Activated naive CD4-positive, alpha-beta T cell treated with anti-CD3 and anti-CD28 coated beads, Interleukin-2, amount 10 ng/mL, durations not matched to agents 7 days and 5 days (primary cell): ENCODE measurements at regions of chr14 and their contacts with region 1.

Region 1: GRCh38 chr14:105374383-105374782 is 24.0 kb upstream of the TEX22 start:
- DNase-seq: no peak
- H3K4me3 Mint-ChIP-seq: no peak overlapping the region
- H3K27ac Mint-ChIP-seq: no peak overlapping the region
- H3K4me1 Mint-ChIP-seq: peaks cover 23% of the 10 kb centered on the region
- H3K27me3 Mint-ChIP-seq: no peaks in the 10 kb centered on the region

Region 2: DNA sequence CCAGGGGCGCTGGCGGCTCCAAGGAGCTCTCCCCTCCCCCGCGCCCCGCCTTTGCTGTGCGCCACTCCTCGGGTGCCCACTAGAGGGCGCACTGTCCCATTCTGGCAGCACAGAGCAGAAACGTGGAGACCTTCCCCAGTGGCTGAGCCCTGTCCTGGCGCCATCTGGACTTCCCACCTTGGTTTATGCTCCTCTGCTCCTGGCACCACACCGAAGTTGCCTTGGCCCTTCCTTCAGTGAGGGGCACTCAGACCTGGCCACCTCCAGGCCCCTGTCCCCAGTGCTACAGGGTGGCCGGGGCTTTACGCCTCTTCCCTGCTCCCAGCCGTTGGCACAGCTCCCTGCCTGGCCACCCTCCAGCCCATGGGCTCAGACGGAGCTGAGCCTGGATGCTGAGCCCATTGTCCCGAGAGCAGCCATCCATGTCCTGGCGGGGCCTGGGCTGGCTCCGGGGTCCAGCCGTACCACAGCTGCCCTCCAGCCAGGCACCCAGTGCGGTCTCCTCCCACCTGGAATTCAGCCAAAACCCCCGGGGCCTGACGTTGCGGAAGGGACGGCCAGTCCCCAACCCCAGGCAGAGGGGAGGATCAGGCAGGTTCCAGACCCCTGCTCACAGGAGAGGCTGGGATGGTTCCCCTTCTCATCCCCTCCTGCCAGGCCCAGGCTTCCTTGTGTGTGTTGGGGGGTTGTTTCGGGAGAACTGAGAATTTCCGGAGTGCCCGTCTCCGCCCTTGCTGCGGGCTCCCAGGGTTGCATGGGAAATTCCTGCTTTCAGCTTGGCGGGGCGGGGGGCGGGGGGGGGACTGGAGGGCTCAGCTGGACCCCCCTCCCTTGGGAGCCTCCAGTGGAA is 106.8 kb after region 1 on chr14:
- CTCF ChIA-PET with region 1: interaction called, 14 read pairs
- DNase-seq: peak; percentile 89
- H3K4me3 Mint-ChIP-seq: peak overlapping the region; percentile 47
- H3K27ac Mint-ChIP-seq: peak overlapping the region; percentile 93
- H3K4me1 Mint-ChIP-seq: peaks cover 57% of the 10 kb centered on the region
- H3K27me3 Mint-ChIP-seq: peaks cover 68% of the 10 kb centered on the region

Region 3: GRCh38 chr14:105490572-105491366 is 116.4 kb after region 1 on chr14 and contains the start of gene TEDC1:
- CTCF ChIA-PET with region 1: interaction called, 66 read pairs
- DNase-seq: peak; percentile 100
- H3K4me3 Mint-ChIP-seq: peak within 1 kb of the TSS; percentile 90
- H3K27ac Mint-ChIP-seq: peak within 1 kb of the TSS; percentile 95
- H3K4me1 Mint-ChIP-seq: peaks cover 35% of the 10 kb centered on the region
- H3K27me3 Mint-ChIP-seq: peaks cover 17% of the 10 kb centered on the region

Region 4: GRCh38 chr14:106578481-106578880 is 1204.1 kb after region 1 on chr14:
- CTCF ChIA-PET with region 1: no interaction called
- DNase-seq: no peak
- H3K4me3 Mint-ChIP-seq: no peak overlapping the region
- H3K27ac Mint-ChIP-seq: no peak overlapping the region
- H3K4me1 Mint-ChIP-seq: no peaks in the 10 kb centered on the region
- H3K27me3 Mint-ChIP-seq: peaks cover 52% of the 10 kb centered on the region